ENCODE measurements at regions of chr5 and their contacts with region 1.

Region 1: GRCh38 chr5:112995764-112996618 is 19.4 kb downstream of the DCP2 start:
- DNase-seq: peak; percentile 26
- H3K4me3 ChIP-seq: no peak overlapping the region
- CTCF ChIP-seq: peak; percentile 78

Region 2: GRCh38 chr5:112525217-112525616 is 470.8 kb before region 1 on chr5:
- CTCF ChIA-PET with region 1: no interaction called
- POLR2A ChIA-PET with region 1: no interaction called
- DNase-seq: no peak
- H3K4me3 ChIP-seq: no peak overlapping the region
- CTCF ChIP-seq: no peak

Region 3: DNA sequence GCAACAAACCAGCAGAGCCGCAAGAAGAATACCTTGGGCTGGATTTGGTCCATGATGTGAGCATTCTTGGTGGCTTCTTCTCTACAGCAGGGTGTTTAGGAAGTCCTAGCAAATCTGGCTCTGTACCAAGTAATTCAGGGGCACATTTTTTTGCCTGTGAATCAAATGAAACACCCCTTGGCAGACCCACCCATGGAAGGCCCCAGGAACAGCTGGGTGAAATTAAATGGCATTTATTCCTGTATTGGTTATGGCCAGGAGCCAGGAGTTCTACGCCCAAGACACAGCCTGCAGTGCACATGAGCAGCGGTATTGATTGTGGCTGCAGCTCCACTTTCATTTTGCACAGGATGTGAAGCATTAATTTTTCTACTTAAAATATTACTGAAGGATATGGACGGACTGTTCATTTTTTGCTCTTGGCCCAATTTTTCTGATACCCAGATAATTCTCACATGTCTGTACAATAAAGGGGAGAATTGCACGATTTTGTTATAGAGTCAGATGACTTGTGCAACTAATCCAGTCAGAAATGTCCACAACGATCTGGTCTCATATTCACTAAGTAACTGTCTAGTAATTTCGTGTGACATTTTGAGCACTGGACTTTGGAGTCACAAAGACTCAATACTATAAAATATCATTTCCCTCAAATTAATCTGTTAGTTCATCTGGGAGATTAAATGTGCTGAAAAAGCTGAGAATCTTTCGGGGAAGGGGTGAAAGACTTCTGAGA is 379.0 kb before region 1 on chr5:
- CTCF ChIA-PET with region 1: no interaction called
- POLR2A ChIA-PET with region 1: no interaction called
- DNase-seq: no peak
- H3K4me3 ChIP-seq: no peak overlapping the region; the same call in 1 of the 2 replicates
- CTCF ChIP-seq: no peak

Region 4: GRCh38 chr5:112983363-112983762 is 12.6 kb before region 1 on chr5:
- CTCF ChIA-PET with region 1: interaction called, 44 read pairs
- POLR2A ChIA-PET with region 1: no interaction called
- DNase-seq: no peak
- H3K4me3 ChIP-seq: no peak overlapping the region
- CTCF ChIP-seq: no peak

Region 5: DNA sequence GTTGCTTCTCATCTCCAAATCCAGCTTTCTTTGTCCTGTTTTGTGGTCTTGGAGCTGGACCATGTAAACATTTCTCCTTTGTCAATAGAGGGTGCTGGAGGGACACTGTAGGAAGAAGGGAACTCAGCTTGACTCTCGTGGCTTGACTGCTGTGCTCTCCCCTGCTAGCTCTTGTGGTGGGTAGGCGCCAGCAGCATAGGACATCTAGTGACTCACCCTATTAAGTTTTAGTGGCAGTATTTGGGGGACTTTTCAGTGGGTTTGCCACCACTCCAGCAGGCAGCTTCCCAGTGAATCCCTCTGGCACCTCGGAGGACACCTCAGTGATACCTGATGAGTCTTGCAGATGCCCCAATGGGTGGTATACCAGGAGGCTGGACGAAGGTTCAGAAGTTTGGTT is 341.0 kb after region 1 on chr5:
- CTCF ChIA-PET with region 1: interaction called, 13 read pairs
- POLR2A ChIA-PET with region 1: no interaction called
- DNase-seq: no peak
- H3K4me3 ChIP-seq: no peak overlapping the region
- CTCF ChIP-seq: peak; percentile 13

Region 6: DNA sequence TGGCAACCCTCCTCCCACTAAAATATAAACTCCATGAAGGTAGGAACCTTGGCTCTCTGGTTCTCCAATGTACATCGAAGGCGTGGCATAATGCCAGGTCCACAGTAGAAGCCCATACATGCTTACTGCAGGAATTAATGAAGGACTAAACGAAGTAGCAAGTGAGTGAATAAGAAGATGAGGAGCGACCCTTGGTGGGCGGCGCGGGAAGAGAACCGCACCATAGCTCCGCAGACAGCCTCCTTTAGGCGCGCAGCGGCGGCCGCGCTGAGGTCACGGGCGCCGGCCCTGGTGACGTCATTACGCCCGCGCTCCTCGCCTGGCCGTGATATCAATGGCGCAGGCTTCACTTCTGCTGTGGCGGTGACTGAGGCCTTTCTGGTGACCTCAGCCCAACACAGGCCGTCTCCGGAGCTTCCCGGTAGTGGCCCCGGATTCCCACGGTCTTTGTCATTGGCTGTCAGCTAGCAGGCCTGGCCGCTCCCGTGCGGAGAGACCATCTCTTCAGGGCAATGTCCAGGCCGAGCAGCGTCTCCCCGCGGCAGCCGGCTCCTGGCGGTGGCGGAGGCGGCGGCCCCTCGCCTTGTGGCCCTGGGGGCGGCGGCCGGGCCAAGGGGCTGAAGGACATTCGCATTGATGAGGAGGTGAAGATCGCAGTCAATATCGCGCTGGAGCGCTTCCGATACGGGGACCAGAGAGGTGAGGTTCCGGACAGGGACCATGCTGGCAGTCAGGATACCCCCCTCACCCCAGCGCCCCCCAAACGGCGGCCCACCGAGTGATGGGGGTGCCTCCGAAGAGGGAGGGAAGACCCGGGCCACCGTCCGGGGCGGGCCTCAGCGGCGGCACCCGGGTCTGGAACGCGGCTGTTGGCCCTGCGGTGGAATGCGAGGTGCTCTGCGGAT is 517.6 kb after region 1 on chr5 and contains the start of gene YTHDC2:
- CTCF ChIA-PET with region 1: interaction called, 147 read pairs
- POLR2A ChIA-PET with region 1: no interaction called
- DNase-seq: no peak
- H3K4me3 ChIP-seq: peak within 1 kb of the TSS; percentile 85
- CTCF ChIP-seq: peak; percentile 43

Region 7: GRCh38 chr5:113606298-113607134 is 610.5 kb after region 1 on chr5:
- CTCF ChIA-PET with region 1: interaction called, 53 read pairs
- POLR2A ChIA-PET with region 1: no interaction called
- DNase-seq: no peak
- H3K4me3 ChIP-seq: no peak overlapping the region
- CTCF ChIP-seq: peak; percentile 61